Gastrocnemius medialis (tissue), 4 donors: ENCODE measurements at regions of chr18 and their contacts with region 1.

Region 1: GRCh38 chr18:73691118-73691517 is 456.5 kb downstream of the FBXO15 start:
- DNase-seq: no peak
- ATAC-seq: peak in 1 of 2 donors; percentile 54
- H3K4me3 ChIP-seq: peak overlapping the region in 1 of 4 donors; percentile 22
- H3K27ac ChIP-seq: peak overlapping the region in 3 of 4 donors; percentile 6 to 39 (median 35)
- H3K4me1 ChIP-seq: no peaks in the 10 kb centered on the region
- H3K27me3 ChIP-seq: no peaks in the 10 kb centered on the region
- CTCF ChIP-seq: no peak
- POLR2A ChIP-seq: peak in 1 of 2 donors; percentile 18

Region 2: DNA sequence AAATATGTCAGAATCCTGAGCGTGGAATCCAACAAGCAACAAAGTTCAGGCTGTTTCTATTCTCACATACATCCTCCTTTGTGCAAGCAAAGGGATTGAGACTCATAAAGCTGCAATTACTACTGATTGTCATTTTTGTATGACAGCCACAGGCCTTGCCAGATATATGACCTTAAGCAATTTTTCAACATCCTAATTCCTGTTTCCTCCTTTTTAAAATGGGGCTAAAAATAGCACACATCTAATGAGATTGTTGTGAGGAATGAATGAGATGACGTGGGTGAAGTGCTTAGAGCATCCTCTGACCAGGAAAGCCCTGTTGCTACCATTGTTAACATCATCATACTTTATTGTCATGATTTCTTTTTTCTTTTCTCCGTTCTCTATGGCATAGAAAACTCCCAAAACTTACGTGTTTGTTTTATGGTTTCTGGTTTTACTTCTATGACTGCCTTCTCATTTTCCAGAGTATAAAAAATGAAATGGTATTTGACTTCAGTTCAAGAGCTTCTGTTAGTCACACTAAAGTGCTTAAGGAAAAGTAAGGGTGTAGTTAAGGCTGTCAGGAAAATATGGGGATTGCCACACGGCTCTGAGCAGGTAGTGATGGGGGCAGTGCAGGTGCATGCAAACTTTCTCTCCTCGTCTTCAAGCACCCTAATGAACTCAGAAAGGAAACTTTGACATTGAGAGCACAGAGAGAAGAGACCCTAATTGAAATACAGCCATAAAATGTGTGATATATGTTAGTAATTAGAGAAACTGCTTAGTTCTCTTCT is 232.7 kb before region 1 on chr18:
- in situ Hi-C with region 1: no loop called
- intact Hi-C with region 1: loop called (anchors 2 kb)
- DNase-seq: no peak
- ATAC-seq: peak in 1 of 2 donors; percentile 30
- H3K4me3 ChIP-seq: no peak overlapping the region
- H3K27ac ChIP-seq: peak overlapping the region; percentile 1 to 41 (median 21)
- H3K4me1 ChIP-seq: no peaks in the 10 kb centered on the region
- H3K27me3 ChIP-seq: no peaks in the 10 kb centered on the region
- CTCF ChIP-seq: no peak
- POLR2A ChIP-seq: no peak